ENCODE measurements at regions of chr15 and their contacts with region 1.

Region 1: GRCh38 chr15:100448492-100448891 is 80.3 kb downstream of the CERS3 start:
- DNase-seq: no peak
- H3K4me3 ChIP-seq: no peak overlapping the region
- H3K4me3 Mint-ChIP-seq: no peak overlapping the region
- H3K27ac ChIP-seq: no peak overlapping the region
- H3K27ac Mint-ChIP-seq: no peak overlapping the region
- H3K4me1 ChIP-seq: no peaks in the 10 kb centered on the region
- H3K4me1 Mint-ChIP-seq: no peaks in the 10 kb centered on the region
- H3K27me3 ChIP-seq: no peaks in the 10 kb centered on the region
- H3K27me3 Mint-ChIP-seq: peaks cover 1 to 2% of the 10 kb centered on the region in 2 donors

Region 2: GRCh38 chr15:100471933-100472332 is 23.4 kb after region 1 on chr15:
- CTCF ChIA-PET with region 1: no interaction called
- POLR2A ChIA-PET with region 1: no interaction called
- intact Hi-C with region 1: no loop called
- DNase-seq: no peak
- H3K4me3 ChIP-seq: no peak overlapping the region
- H3K4me3 Mint-ChIP-seq: no peak overlapping the region
- H3K27ac ChIP-seq: no peak overlapping the region
- H3K27ac Mint-ChIP-seq: no peak overlapping the region
- H3K4me1 ChIP-seq: no peaks in the 10 kb centered on the region
- H3K4me1 Mint-ChIP-seq: no peaks in the 10 kb centered on the region
- H3K27me3 ChIP-seq: no peaks in the 10 kb centered on the region
- H3K27me3 Mint-ChIP-seq: no peaks in the 10 kb centered on the region

Region 3: DNA sequence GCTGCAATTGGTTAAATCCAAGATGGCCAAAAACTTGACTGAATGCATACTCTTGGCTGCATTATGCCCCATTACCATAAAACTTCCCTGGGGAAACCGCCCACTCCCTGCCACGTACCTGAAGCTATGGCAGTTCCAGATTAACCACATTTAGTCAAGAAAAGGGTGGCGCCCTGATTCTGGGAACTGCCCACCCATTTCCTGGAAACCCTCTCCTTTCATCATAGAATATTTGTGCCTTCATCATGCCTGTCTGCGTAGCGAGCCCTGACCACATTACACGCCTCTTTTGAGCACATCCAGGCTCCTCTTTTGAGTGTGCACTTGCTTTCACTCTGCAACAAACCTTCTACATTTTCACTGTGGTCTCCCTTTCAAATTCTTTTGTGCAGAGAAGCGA is 148.3 kb after region 1 on chr15:
- CTCF ChIA-PET with region 1: no interaction called
- POLR2A ChIA-PET with region 1: no interaction called
- intact Hi-C with region 1: no loop called
- DNase-seq: peak; percentile 88 to 95 (median 92)
- H3K4me3 ChIP-seq: peak overlapping the region; percentile 48 to 59
- H3K4me3 Mint-ChIP-seq: peak overlapping the region; percentile 75 to 91 (median 86)
- H3K27ac ChIP-seq: peak overlapping the region; percentile 77
- H3K27ac Mint-ChIP-seq: peak overlapping the region in 6 of 7 donors; percentile 90 to 98 (median 96)
- H3K4me1 ChIP-seq: peaks cover 87% of the 10 kb centered on the region
- H3K4me1 Mint-ChIP-seq: peaks cover 52 to 71% (median 58%) of the 10 kb centered on the region in 4 donors
- H3K27me3 ChIP-seq: no peaks in the 10 kb centered on the region
- H3K27me3 Mint-ChIP-seq: no peaks in the 10 kb centered on the region

Region 4: GRCh38 chr15:101070502-101071273 is 622.2 kb after region 1 on chr15:
- CTCF ChIA-PET with region 1: no interaction called
- POLR2A ChIA-PET with region 1: no interaction called
- intact Hi-C with region 1: loop called (anchors 10 kb)
- DNase-seq: no peak
- H3K4me3 ChIP-seq: no peak overlapping the region
- H3K4me3 Mint-ChIP-seq: no peak overlapping the region
- H3K27ac ChIP-seq: no peak overlapping the region
- H3K27ac Mint-ChIP-seq: peak overlapping the region in 1 of 7 donors; percentile 30
- H3K4me1 ChIP-seq: no peaks in the 10 kb centered on the region
- H3K4me1 Mint-ChIP-seq: no peaks in the 10 kb centered on the region
- H3K27me3 ChIP-seq: no peaks in the 10 kb centered on the region
- H3K27me3 Mint-ChIP-seq: no peaks in the 10 kb centered on the region